Gastrocnemius medialis (tissue), 4 donors: ENCODE measurements at regions of chr10 and their contacts with region 1.

Region 1: GRCh38 chr10:3828404-3829155 is 43.6 kb upstream of the KLF6 start:
- DNase-seq: no peak
- ATAC-seq: no peak
- H3K4me3 ChIP-seq: peak overlapping the region; percentile 50 to 62 (median 58)
- H3K27ac ChIP-seq: peak overlapping the region; percentile 73 to 92 (median 89)
- H3K4me1 ChIP-seq: peaks cover 33 to 36% of the 10 kb centered on the region in 2 donors
- H3K27me3 ChIP-seq: no peaks in the 10 kb centered on the region
- CTCF ChIP-seq: no peak
- POLR2A ChIP-seq: no peak

Region 2: GRCh38 chr10:3740157-3740871 is 88.3 kb before region 1 on chr10:
- in situ Hi-C with region 1: no loop called
- intact Hi-C with region 1: loop called (anchors 10 kb)
- DNase-seq: no peak
- ATAC-seq: peak; percentile 88 to 96
- H3K4me3 ChIP-seq: no peak overlapping the region
- H3K27ac ChIP-seq: peak overlapping the region; percentile 19 to 56 (median 40)
- H3K4me1 ChIP-seq: peaks cover 2 to 3% of the 10 kb centered on the region in 2 donors
- H3K27me3 ChIP-seq: no peaks in the 10 kb centered on the region
- CTCF ChIP-seq: no peak
- POLR2A ChIP-seq: no peak

Region 3: DNA sequence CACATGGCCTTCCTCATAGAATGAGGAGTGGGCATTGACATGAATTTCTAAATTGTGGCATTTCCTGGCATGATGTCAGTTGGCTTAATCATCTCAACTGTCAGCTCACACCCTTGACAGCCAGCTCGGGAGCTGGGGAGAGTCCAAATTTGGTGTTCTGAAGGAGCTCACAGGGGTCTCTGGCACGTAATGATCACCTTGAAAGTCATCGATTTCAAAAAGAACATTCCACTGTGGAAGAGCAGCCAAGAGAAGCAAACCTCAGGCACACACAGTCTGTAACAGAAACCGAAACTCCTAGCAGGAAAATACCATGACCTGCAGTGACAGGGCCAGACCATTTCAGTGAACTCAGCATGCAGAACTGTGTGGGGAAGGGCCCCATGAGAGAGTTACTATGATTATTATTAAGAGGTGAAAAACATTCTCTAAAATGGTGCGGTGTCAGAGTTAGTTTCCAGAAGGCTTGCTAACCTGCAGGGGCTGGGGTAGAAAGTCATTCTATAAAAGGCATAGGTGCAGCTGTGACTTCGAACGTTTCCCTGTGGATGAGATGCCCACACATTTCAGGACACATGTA is 17.2 kb before region 1 on chr10:
- in situ Hi-C with region 1: no loop called
- intact Hi-C with region 1: loop called (anchors 1 kb)
- DNase-seq: peak in 1 of 2 donors; percentile 61
- ATAC-seq: peak; percentile 33 to 58
- H3K4me3 ChIP-seq: peak overlapping the region in 3 of 4 donors; percentile 17 to 26 (median 18)
- H3K27ac ChIP-seq: peak overlapping the region; percentile 85 to 96 (median 90)
- H3K4me1 ChIP-seq: peaks cover 45 to 46% of the 10 kb centered on the region in 2 donors
- H3K27me3 ChIP-seq: no peaks in the 10 kb centered on the region
- CTCF ChIP-seq: no peak
- POLR2A ChIP-seq: peak in 1 of 2 donors; percentile 42

Region 4: DNA sequence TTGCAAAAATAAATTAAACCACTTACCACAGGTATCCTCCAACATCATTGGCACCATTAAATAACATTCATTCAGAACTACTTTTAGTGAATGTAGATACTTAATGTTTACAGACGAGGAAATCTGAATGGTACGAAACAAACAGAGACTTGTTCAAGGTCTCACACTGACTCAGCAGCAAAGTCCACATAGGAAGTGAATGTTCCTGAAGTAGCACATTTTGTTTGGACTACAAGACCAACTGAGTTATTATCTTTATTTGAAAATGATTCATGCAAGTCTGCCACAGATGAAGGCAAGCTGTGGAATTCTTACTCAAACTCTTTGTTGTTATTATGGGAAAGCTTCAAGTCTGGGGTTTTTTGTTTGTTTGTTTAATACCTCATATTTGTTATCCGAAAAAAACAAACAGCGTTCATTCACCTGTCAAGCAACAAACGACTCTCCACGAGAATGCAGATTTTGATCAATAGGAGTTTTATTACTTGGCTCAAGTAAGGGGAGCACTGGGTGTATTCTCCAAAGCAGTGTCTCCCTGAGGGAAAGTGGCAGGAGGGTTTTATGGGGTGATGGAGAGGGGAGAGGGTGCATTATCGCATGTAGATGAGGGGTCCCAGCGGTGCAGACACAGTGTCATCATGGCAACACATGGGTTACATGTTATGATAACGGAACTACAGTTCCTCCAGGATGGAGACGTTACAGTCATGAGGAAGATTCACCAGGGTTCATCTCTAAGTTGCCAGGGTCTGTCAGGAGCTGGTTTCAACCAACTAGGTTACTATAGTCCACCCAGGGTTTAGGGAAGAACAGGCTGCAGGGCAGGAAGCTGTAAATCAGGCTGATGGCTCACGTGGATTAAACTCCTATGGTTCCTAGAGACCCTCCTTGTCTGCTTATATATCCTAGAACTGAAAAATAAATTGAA is 849.7 kb after region 1 on chr10:
- in situ Hi-C with region 1: loop called in 1 of 4 experiments (anchors 25 kb)
- intact Hi-C with region 1: loop called (anchors 5 kb)
- DNase-seq: no peak
- ATAC-seq: peak; percentile 57 to 85
- H3K4me3 ChIP-seq: no peak overlapping the region
- H3K27ac ChIP-seq: peak overlapping the region; percentile 69 to 96 (median 93)
- H3K4me1 ChIP-seq: peaks cover 25 to 32% of the 10 kb centered on the region in 2 donors
- H3K27me3 ChIP-seq: no peaks in the 10 kb centered on the region
- CTCF ChIP-seq: no peak
- POLR2A ChIP-seq: no peak